Mammary epithelial cell (primary cell): ENCODE measurements at regions of chr1 and their contacts with region 1.

Region 1: GRCh38 chr1:160410406-160411005 is 10.1 kb downstream of the VANGL2 start:
- DNase-seq: no peak
- H3K4me3 ChIP-seq: no peak overlapping the region
- H3K27ac ChIP-seq: no peak overlapping the region
- H3K4me1 ChIP-seq: peaks cover 36% of the 10 kb centered on the region
- H3K27me3 ChIP-seq: no peaks in the 10 kb centered on the region
- CTCF ChIP-seq: no peak

Region 2: GRCh38 chr1:159970932-159971342 is 439.6 kb before region 1 on chr1:
- CTCF ChIA-PET with region 1: no interaction called
- dilution Hi-C with region 1: no loop called
- in situ Hi-C with region 1: no loop called
- intact Hi-C with region 1: no loop called
- DNase-seq: no peak
- H3K4me3 ChIP-seq: no peak overlapping the region
- H3K27ac ChIP-seq: no peak overlapping the region
- H3K4me1 ChIP-seq: no peaks in the 10 kb centered on the region
- H3K27me3 ChIP-seq: no peaks in the 10 kb centered on the region
- CTCF ChIP-seq: no peak

Region 3: GRCh38 chr1:160219062-160219929 is 191.2 kb before region 1 on chr1:
- CTCF ChIA-PET with region 1: no interaction called
- dilution Hi-C with region 1: no loop called
- in situ Hi-C with region 1: no loop called
- intact Hi-C with region 1: no loop called
- DNase-seq: peak; percentile 71
- H3K4me3 ChIP-seq: no peak overlapping the region
- H3K27ac ChIP-seq: peak overlapping the region; percentile 63
- H3K4me1 ChIP-seq: peaks cover 47% of the 10 kb centered on the region
- H3K27me3 ChIP-seq: no peaks in the 10 kb centered on the region
- CTCF ChIP-seq: peak; percentile 46 to 66

Region 4: GRCh38 chr1:160325252-160325651 is 85.3 kb before region 1 on chr1:
- CTCF ChIA-PET with region 1: no interaction called
- dilution Hi-C with region 1: no loop called
- in situ Hi-C with region 1: no loop called
- intact Hi-C with region 1: no loop called
- DNase-seq: no peak
- H3K4me3 ChIP-seq: no peak overlapping the region
- H3K27ac ChIP-seq: no peak overlapping the region
- H3K4me1 ChIP-seq: no peaks in the 10 kb centered on the region
- H3K27me3 ChIP-seq: no peaks in the 10 kb centered on the region
- CTCF ChIP-seq: no peak

Region 5: GRCh38 chr1:160359559-160360226 is 50.8 kb before region 1 on chr1:
- CTCF ChIA-PET with region 1: no interaction called
- dilution Hi-C with region 1: no loop called
- in situ Hi-C with region 1: loop called (anchors 5 kb)
- intact Hi-C with region 1: loop called (anchors 1 kb)
- DNase-seq: no peak
- H3K4me3 ChIP-seq: no peak overlapping the region
- H3K27ac ChIP-seq: no peak overlapping the region
- H3K4me1 ChIP-seq: no peaks in the 10 kb centered on the region
- H3K27me3 ChIP-seq: no peaks in the 10 kb centered on the region
- CTCF ChIP-seq: peak in 1 of 2 donors; percentile 5